ENCODE measurements at regions of chrX and their contacts with region 1.

Region 1: DNA sequence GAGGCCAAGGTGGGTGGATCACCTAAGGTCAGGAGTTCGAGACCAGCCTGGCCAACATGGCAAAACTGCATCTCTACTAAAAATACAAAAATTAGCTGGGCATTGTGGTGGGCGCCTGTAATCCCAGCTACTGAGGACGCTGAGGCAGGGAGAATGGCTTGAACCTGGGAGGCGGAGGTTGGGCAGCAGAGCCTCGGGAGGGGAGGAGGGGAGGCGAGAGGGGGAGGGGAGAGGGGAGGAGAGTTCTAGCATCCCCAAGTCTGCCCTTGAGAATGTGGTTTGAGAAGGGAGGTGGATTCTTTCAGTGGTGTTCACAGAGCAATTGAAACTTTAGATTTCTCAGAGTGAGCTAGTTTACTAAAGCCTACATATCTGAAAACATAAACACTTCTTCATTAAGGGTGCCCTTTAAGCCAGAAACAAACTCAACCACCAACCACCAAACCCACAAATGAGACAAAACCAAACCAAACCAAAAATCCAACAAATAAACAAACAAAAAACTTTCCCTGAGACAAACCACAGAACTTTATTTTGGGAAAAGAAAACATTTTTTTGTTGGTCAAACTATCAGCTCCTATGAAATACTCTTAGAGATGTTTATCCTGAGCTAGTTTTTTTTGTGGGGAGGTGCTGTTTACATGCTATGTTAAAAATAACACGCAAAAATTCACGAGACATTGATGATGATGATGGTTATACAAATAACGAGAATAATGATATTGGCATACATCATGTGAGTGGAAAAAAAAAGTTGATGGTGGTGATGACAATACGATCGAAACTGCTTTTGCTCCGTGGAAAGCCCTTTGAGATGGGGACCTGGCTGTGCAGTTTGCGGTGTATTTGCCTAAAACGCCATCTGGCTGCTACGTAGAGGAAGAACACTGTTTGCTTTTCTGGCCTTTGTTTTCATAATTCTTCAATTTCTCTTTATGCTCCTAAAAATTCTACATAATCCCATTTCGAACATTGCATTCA is 98.2 kb upstream of the PRKX start:
- DNase-seq: no peak
- ATAC-seq: no peak
- H3K4me3 ChIP-seq: no peak overlapping the region
- H3K27ac ChIP-seq: no peak overlapping the region
- H3K4me1 ChIP-seq: peaks cover 0 to 7% of the 10 kb centered on the region in 2 donors
- H3K27me3 ChIP-seq: peaks cover 0 to 26% (median 8%) of the 10 kb centered on the region in 3 donors
- CTCF ChIP-seq: peak in 2 of 5 experiments; percentile 20 to 49
- POLR2A ChIP-seq: no peak

Region 2: DNA sequence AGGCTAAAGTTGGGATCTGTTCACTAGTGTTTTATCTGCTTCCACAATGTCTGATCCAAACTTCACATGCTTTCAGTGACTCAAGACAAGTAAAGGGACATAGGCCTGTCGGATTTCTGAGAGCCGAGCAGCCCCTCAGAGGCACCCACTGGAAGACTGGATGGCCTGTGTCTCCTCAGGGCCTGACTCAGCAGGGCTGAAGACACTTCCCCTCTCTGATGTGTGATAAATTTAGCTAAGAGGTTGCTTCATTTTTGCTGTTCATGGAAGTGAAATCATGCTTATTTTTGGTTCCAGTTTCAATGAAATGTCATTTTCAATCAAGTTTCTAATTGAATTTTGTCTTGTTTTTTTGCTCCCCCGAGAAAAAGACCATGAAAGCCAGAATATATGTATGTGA is 558.9 kb before region 1 on chrX:
- in situ Hi-C with region 1: no loop called
- intact Hi-C with region 1: no loop called
- DNase-seq: no peak
- ATAC-seq: no peak
- H3K4me3 ChIP-seq: no peak overlapping the region
- H3K27ac ChIP-seq: no peak overlapping the region
- H3K4me1 ChIP-seq: no peaks in the 10 kb centered on the region
- H3K27me3 ChIP-seq: no peaks in the 10 kb centered on the region
- CTCF ChIP-seq: no peak
- POLR2A ChIP-seq: no peak

Region 3: DNA sequence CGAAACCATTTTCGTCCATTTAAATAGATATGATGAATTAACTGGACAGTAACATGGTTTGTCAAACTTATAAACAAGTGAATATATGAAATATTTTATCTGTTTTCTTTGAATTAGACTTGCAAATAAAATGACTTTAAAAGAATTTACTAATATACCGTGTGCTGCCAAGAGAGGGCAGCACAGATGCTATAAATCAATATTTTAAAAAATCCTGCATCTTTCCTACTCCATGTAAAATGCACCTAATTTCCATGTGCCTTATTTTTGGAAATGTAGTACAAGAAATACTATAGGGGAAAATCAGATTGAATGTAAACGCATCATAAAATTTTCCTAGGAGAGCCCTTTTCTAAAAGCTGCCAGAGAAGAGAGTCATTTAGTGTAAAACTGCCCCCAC is 160.3 kb before region 1 on chrX:
- in situ Hi-C with region 1: loop called in 1 of 4 experiments (anchors 10 kb)
- intact Hi-C with region 1: loop called (anchors 5 kb)
- DNase-seq: no peak
- ATAC-seq: no peak
- H3K4me3 ChIP-seq: no peak overlapping the region
- H3K27ac ChIP-seq: no peak overlapping the region
- H3K4me1 ChIP-seq: no peaks in the 10 kb centered on the region
- H3K27me3 ChIP-seq: no peaks in the 10 kb centered on the region
- CTCF ChIP-seq: no peak
- POLR2A ChIP-seq: no peak

Region 4: DNA sequence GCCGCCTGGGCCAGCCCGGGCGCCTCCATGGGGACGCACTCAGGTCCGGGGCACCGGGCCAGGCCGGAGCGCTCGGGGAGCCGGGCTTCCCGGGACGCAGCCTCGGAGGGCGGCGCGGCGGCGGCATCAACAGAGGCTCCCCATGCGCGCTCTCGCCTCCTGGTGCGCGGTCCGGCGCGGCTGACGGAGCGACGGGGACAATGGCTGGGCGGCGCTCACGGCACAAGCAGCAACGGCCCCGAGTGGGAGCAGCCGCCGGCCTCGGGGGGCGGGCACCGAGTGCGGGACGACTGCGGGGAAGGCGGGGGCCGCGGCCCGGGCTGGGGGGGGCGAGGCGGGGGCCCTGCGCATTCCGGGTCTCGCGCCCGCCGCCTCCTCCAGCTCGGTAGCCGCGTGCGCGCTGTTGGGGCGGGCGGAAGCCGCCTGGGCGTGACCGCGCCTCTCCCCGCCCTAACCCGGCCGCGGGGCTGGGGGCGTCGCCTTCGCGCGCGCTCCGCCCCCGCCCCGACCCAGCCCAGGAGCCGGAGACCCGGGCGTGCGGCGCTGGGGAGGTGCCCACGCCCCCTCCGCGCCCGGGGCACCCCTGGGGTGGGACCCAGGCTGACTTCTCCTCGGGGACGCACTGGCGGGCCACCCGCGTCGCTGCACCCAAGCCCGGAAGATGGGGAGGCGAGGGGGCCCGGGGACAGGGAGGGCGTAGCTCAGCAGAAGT is 98.2 kb before region 1 on chrX and contains the start of gene PRKX:
- in situ Hi-C with region 1: no loop called
- intact Hi-C with region 1: loop called (anchors 5 kb)
- DNase-seq: no peak
- ATAC-seq: peak; percentile 37 to 44
- H3K4me3 ChIP-seq: peak within 1 kb of the TSS; percentile 48 to 61 (median 50)
- H3K27ac ChIP-seq: peak within 1 kb of the TSS; percentile 60 to 75 (median 72)
- H3K4me1 ChIP-seq: no peaks in the 10 kb centered on the region
- H3K27me3 ChIP-seq: peaks cover 0 to 17% (median 10%) of the 10 kb centered on the region in 3 donors
- CTCF ChIP-seq: no peak
- POLR2A ChIP-seq: peak in 1 of 2 donors; percentile 43
- total RNA-seq, gene PRKX: 1.2 to 4.7 (median 2.3) TPM

Measured in gastrocnemius medialis (tissue), 4 donors.